ENCODE measurements at regions of chr19 and their contacts with region 1.

Region 1: DNA sequence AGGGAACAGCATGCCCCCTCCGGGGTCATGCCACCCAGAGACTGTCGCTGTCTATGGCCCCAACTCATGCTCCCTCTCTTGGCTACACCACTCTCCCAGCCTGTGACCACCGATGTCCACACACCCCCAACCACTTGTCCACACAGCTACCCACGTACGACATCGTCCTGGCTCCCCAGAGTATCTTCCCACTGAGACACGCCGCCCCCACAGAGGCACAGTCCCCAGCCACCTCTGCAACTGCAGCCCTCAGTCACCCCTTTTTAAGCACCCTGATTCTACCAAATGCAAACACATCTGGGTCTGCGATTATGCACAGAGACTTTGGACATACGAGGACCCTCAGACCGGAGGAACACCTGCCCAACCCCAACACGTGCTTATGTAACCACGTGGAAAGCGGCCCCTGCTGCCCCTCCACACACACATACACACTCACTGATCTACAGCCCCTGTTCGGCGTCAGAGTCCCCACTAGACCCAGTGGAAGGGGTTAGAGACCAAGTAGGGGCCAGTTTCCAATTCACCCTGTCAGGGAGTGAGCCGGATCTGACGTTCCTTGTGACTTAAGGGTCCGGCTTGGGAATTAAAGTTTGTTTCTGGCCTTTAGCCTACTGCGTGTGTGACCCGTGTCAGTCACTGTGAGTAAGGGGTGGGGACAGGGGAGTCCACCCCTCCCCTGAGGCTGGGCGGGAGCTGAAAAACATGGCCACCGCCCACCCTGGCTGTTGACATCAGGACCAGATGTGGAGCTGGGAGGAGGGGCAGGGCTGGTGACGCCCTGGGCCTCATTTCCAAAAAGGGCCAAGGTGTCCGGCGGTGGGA is 11.9 kb upstream of the AXL start:
- DNase-seq: peak; percentile 93 to 97
- H3K4me3 ChIP-seq: peak overlapping the region; percentile 24 to 35
- H3K27ac ChIP-seq: peak overlapping the region; percentile 67 to 73
- H3K4me1 ChIP-seq: peaks cover 0 to 20% (median 11%) of the 10 kb centered on the region in 4 donors
- H3K27me3 ChIP-seq: no peaks in the 10 kb centered on the region
- CTCF ChIP-seq: no peak

Region 2: GRCh38 chr19:41310033-41310758 is 103.1 kb after region 1 on chr19 and contains the start of gene CCDC97:
- intact Hi-C with region 1: loop called (anchors 2 kb)
- DNase-seq: peak; percentile 77 to 92
- H3K4me3 ChIP-seq: peak within 1 kb of the TSS; percentile 69 to 70
- H3K27ac ChIP-seq: peak within 1 kb of the TSS; percentile 88 to 91
- H3K4me1 ChIP-seq: peaks cover 4 to 40% (median 32%) of the 10 kb centered on the region in 4 donors
- H3K27me3 ChIP-seq: no peaks in the 10 kb centered on the region
- CTCF ChIP-seq: peak in 1 of 2 experiments; percentile 15